HepG2 (cell line): ENCODE measurements at regions of chr19 and their contacts with region 1.

Region 1: GRCh38 chr19:43743022-43743421 is 11.7 kb downstream of the SMG9 start:
- DNase-seq: no peak
- ATAC-seq: no peak
- H3K4me3 ChIP-seq: no peak overlapping the region
- H3K27ac ChIP-seq: no peak overlapping the region
- H3K4me1 ChIP-seq: no peaks in the 10 kb centered on the region
- H3K27me3 ChIP-seq: no peaks in the 10 kb centered on the region
- CTCF ChIP-seq: no peak
- EP300 ChIP-seq: no peak
- POLR2A ChIP-seq: no peak
- RAD21 ChIP-seq: no peak

Region 2: DNA sequence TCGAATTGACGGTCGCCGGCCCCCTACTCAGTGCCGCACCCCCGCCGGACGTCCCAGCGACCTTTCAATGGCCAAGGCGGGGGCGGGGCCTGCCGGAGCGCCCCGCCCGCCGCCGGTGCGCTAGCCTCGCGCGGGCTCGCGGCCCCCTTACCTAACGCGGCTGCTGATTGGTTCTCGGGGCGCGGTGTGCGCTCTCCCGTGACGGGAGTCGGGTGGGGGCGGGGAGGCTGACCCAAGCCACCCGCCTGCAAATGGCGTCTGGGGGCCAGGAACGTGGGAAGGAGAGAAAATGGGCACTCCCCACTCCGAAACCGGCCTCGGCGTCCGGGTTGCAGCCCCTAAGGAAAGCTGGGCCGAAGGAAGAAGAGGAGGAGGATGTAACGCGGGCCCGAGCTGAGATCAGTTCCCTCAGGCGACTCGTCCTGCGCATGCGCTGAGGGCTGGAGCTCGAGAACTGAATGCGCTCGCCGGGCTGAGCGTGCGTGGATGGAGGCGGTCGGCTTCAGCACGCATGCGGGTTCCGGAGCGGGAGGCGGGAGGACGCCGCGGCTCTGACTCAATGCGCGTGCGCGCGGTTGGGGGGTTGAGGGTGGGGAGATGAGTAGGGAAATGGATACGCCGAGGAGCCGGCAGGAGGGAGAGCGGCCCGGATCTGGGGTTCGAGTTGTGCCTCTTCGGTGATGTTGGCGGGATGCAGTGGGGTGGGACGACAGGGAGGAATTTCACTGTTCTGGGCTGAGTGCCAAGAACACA is 11.7 kb after region 1 on chr19 and contains the start of gene SMG9:
- CTCF ChIA-PET with region 1: no interaction called
- POLR2A ChIA-PET with region 1: interaction called, 13 read pairs
- in situ Hi-C with region 1: no loop called
- intact Hi-C with region 1: no loop called
- DNase-seq: peak; percentile 94
- ATAC-seq: peak; percentile 95
- H3K4me3 ChIP-seq: peak within 1 kb of the TSS; percentile 66 to 83 (median 67)
- H3K27ac ChIP-seq: peak within 1 kb of the TSS; percentile 93
- H3K4me1 ChIP-seq: peaks cover 26% of the 10 kb centered on the region
- H3K27me3 ChIP-seq: no peaks in the 10 kb centered on the region
- CTCF ChIP-seq: no peak
- EP300 ChIP-seq: no peak
- POLR2A ChIP-seq: peak; percentile 90 to 94
- RAD21 ChIP-seq: no peak
- total RNA-seq, gene SMG9: 9.6 and 18.7 TPM in 2 replicates

Region 3: GRCh38 chr19:43784981-43785808 is 42.2 kb after region 1 on chr19:
- CTCF ChIA-PET with region 1: interaction called, 30 read pairs
- POLR2A ChIA-PET with region 1: no interaction called
- in situ Hi-C with region 1: loop called (anchors 5 kb)
- intact Hi-C with region 1: loop called (anchors 1 kb)
- DNase-seq: peak; percentile 60
- ATAC-seq: peak; percentile 85
- H3K4me3 ChIP-seq: peak overlapping the region in 1 of 3 experiments; percentile 60; a peak in 2 of 6 replicates
- H3K27ac ChIP-seq: no peak overlapping the region
- H3K4me1 ChIP-seq: peaks cover 18% of the 10 kb centered on the region
- H3K27me3 ChIP-seq: no peaks in the 10 kb centered on the region
- CTCF ChIP-seq: peak; percentile 93
- EP300 ChIP-seq: no peak
- POLR2A ChIP-seq: no peak
- RAD21 ChIP-seq: peak; percentile 84